ENCODE measurements at regions of chr14 and their contacts with region 1.

Region 1: GRCh38 chr14:63760014-63760413 is 32.1 kb upstream of the SGPP1 start:
- DNase-seq: no peak
- H3K4me3 Mint-ChIP-seq: no peak overlapping the region
- H3K27ac Mint-ChIP-seq: peak overlapping the region; percentile 87
- H3K4me1 Mint-ChIP-seq: peaks cover 16% of the 10 kb centered on the region
- H3K27me3 Mint-ChIP-seq: no peaks in the 10 kb centered on the region

Region 2: GRCh38 chr14:63727774-63728728 is 32.0 kb before region 1 on chr14 and contains the start of gene SGPP1:
- intact Hi-C with region 1: loop called (anchors 5 kb)
- DNase-seq: peak; percentile 80
- H3K4me3 Mint-ChIP-seq: peak within 1 kb of the TSS; percentile 100
- H3K27ac Mint-ChIP-seq: peak within 1 kb of the TSS; percentile 94
- H3K4me1 Mint-ChIP-seq: peaks cover 29% of the 10 kb centered on the region
- H3K27me3 Mint-ChIP-seq: peaks cover 22% of the 10 kb centered on the region
- total RNA-seq, gene SGPP1: 13.0 and 14.0 TPM in 2 replicates

Region 3: GRCh38 chr14:63777024-63777423 is 17.0 kb after region 1 on chr14:
- intact Hi-C with region 1: no loop called
- DNase-seq: no peak
- H3K4me3 Mint-ChIP-seq: no peak overlapping the region
- H3K27ac Mint-ChIP-seq: no peak overlapping the region
- H3K4me1 Mint-ChIP-seq: peaks cover 2% of the 10 kb centered on the region
- H3K27me3 Mint-ChIP-seq: no peaks in the 10 kb centered on the region

Region 4: GRCh38 chr14:63933110-63933509 is 173.1 kb after region 1 on chr14:
- intact Hi-C with region 1: no loop called
- DNase-seq: no peak
- H3K4me3 Mint-ChIP-seq: no peak overlapping the region
- H3K27ac Mint-ChIP-seq: no peak overlapping the region
- H3K4me1 Mint-ChIP-seq: peaks cover 14% of the 10 kb centered on the region
- H3K27me3 Mint-ChIP-seq: no peaks in the 10 kb centered on the region

Measured in activated T-helper 2 cell treated with anti-CD3 and anti-CD28 coated beads, Interferon-gamma antibody, Interleukin-2, Interleukin-4, amounts not matched to agents 10 μg/mL and 5 μg/mL and 100 μg/mL, durations not matched to agents 14 hours and 24 hours and 36 hours (primary cell).